Esophagus squamous epithelium (tissue), 5 donors: ENCODE measurements at regions of chr7 and their contacts with region 1.

Region 1: GRCh38 chr7:45155357-45155900 is 2.2 kb upstream of the RAMP3 start:
- DNase-seq: no peak
- H3K4me3 ChIP-seq: no peak overlapping the region
- H3K27ac ChIP-seq: no peak overlapping the region
- H3K4me1 ChIP-seq: peaks cover 4 to 19% (median 11%) of the 10 kb centered on the region in 3 donors
- H3K27me3 ChIP-seq: peaks cover 0 to 36% (median 0%) of the 10 kb centered on the region in 4 donors
- CTCF ChIP-seq: no peak
- POLR2A ChIP-seq: no peak

Region 2: GRCh38 chr7:45259966-45260646 is 104.7 kb after region 1 on chr7:
- intact Hi-C with region 1: loop called (anchors 2 kb)
- DNase-seq: no peak
- H3K4me3 ChIP-seq: no peak overlapping the region
- H3K27ac ChIP-seq: no peak overlapping the region
- H3K4me1 ChIP-seq: peaks cover 0 to 4% (median 0%) of the 10 kb centered on the region in 3 donors
- H3K27me3 ChIP-seq: peaks cover 0 to 17% (median 0%) of the 10 kb centered on the region in 4 donors
- CTCF ChIP-seq: peak; percentile 90 to 100 (median 93)
- POLR2A ChIP-seq: no peak

Region 3: DNA sequence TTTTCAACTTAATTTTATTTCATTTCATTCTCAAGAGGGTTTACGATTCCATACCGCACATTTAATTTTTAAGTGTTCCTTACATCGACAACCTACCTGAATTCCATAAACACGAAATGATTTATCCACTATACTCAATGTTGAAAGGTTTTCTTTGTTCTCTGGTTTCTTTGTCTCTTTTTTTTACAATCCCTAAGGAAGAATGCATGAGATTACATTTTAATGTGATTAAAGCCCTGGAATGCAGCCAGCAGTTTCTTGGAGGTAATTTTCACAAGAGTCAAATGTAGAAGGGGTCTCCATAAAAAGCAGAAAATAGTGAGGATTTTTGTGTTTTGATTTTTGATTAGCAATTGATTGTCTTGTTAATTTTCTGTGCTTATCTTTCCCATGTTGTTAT is 359.5 kb after region 1 on chr7:
- intact Hi-C with region 1: no loop called
- DNase-seq: no peak
- H3K4me3 ChIP-seq: no peak overlapping the region
- H3K27ac ChIP-seq: no peak overlapping the region
- H3K4me1 ChIP-seq: no peaks in the 10 kb centered on the region
- H3K27me3 ChIP-seq: no peaks in the 10 kb centered on the region
- CTCF ChIP-seq: no peak
- POLR2A ChIP-seq: no peak